ENCODE measurements at regions of chr9 and their contacts with region 1.

Region 1: DNA sequence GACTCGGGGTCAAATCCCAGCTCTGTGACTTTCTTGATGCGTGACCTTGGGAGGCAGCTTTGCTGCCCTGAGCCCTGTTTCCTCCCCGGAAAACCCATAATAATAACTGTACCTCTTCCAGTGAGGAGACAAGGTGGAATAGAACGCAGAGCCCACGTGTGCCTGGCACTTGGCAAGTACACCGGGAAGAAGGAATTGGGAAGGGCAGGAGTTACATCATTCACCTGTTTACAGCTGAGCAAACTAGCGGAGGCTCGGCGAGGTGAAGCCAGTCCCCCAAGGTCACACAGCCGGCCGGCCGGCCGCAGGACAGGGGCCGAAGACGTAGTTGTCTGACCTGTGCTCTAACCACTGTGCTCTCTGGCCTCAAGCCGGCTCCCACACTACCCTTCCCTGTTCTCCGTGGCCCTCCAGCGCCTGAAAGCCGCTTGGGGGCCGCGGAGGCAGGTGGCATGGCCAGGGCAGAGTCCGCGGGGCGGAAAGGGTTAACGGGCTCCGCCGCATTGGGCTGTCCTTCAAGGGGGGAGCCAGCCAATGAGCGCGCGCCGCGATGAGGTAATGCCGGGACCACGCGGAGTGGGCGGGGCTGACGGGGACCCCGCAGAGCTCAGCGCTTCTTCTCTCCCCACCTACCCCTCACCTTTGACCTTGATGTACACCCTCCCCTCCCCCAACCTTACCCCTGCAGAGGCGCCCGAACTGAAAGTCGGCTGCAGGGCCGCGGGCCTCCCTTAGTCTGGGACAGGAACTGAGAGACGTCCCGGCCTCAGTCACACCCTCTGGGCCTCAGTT is 125.2 kb downstream of the C9orf50 start:
- DNase-seq: peak; percentile 96 to 98 (median 97)
- H3K4me3 ChIP-seq: peak overlapping the region; percentile 34 to 73 (median 63)
- H3K27ac ChIP-seq: peak overlapping the region; percentile 100
- H3K4me1 ChIP-seq: peaks cover 11 to 62% (median 39%) of the 10 kb centered on the region in 3 donors
- H3K27me3 ChIP-seq: no peaks in the 10 kb centered on the region
- CTCF ChIP-seq: no peak

Region 2: DNA sequence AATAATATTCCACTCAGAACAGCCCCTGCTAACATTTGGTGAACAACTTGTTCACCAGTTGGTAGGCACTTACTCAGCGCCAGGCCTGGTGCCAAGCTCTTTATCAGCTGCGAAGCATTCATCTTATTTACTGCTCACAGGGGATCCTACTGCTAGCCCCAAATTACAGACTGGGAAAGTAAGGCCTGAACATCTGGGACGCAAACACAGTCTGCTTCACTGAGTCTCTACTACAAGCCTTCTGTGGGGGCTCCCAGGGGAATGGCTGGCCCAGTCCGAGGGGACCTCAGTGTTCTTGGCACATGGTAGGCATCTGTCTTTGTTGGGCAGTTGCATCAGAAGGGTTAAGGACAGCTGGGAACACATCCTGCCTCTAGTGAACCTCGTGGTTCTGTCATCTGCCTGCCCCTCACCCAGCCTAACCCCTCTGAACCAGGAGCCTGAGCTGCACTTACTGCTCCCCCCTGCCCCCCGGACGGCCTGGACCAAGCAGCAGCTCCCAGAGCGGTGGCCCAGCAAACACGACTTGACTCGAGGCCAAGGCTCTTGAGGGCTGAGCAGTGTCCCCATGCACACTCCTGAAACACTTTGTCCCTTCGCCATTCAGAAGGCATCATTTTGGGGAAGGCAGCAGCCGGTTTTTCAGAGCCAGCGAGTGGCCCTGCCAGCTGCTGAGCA is 575.2 kb before region 1 on chr9 and contains the start of gene PHYHD1:
- intact Hi-C with region 1: no loop called
- DNase-seq: peak in 2 of 5 donors; percentile 31 to 93
- H3K4me3 ChIP-seq: peak within 1 kb of the TSS; percentile 66 to 71 (median 67)
- H3K27ac ChIP-seq: peak within 1 kb of the TSS; percentile 84 to 90
- H3K4me1 ChIP-seq: peaks cover 0 to 30% (median 24%) of the 10 kb centered on the region in 3 donors
- H3K27me3 ChIP-seq: no peaks in the 10 kb centered on the region
- CTCF ChIP-seq: no peak
- total RNA-seq, gene PHYHD1: 59.0 TPM

Region 3: GRCh38 chr9:129584136-129584535 is 88.4 kb after region 1 on chr9:
- intact Hi-C with region 1: no loop called
- DNase-seq: peak in 3 of 5 donors; percentile 65 to 85 (median 83)
- H3K4me3 ChIP-seq: no peak overlapping the region
- H3K27ac ChIP-seq: no peak overlapping the region
- H3K4me1 ChIP-seq: no peaks in the 10 kb centered on the region
- H3K27me3 ChIP-seq: no peaks in the 10 kb centered on the region
- CTCF ChIP-seq: no peak

Region 4: DNA sequence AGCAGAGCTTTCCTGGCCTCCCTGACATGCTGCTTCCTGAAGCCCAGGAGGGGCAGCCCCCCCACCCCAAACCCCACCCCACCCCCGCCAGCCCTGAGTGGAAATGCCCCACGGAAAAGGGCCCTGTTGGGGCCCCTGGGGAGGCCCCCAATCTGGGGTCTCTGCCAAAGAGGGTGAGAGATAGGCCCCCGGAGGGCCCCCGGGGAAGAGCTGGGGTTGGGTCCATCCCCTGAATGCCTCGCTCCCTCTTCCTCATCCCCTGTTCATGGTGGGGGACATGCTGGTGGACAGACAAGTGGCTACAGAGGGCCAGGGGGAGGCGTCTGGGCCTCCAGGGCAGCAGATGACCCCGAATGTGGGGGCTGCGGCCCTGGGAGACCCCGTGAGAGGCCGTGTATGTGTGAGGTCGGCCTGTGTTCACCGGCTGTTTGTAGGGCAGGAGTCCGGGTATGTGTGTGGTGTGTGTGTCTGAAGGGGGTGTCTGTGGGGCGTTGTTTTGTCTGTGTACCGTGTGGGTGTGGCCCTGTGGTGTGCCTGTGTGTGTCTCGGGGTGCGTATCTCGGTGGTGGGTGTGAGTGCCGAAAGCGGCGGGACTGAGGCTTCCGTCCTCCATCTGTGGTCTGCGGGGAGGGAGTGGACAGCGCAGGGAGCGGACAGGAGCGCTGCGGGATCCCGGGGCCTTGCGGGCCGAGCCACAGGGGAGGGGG is 113.9 kb after region 1 on chr9:
- intact Hi-C with region 1: loop called (anchors 10 kb)
- DNase-seq: peak in 4 of 5 donors; percentile 61 to 88 (median 77)
- H3K4me3 ChIP-seq: peak overlapping the region in 2 of 3 donors; percentile 9 to 26
- H3K27ac ChIP-seq: peak overlapping the region; percentile 80 to 92
- H3K4me1 ChIP-seq: peaks cover 0 to 34% (median 18%) of the 10 kb centered on the region in 3 donors
- H3K27me3 ChIP-seq: no peaks in the 10 kb centered on the region
- CTCF ChIP-seq: no peak